ENCODE measurements at regions of chr10 and their contacts with region 1.

Region 1: GRCh38 chr10:98045785-98046389 is 15.5 kb upstream of the CRTAC1 start:
- DNase-seq: peak; percentile 73
- ATAC-seq: peak; percentile 92
- H3K4me3 Mint-ChIP-seq: no peak overlapping the region
- H3K27ac Mint-ChIP-seq: no peak overlapping the region
- H3K4me1 Mint-ChIP-seq: no peaks in the 10 kb centered on the region
- H3K27me3 Mint-ChIP-seq: peaks cover 28% of the 10 kb centered on the region
- CTCF ChIP-seq: peak; percentile 83

Region 2: GRCh38 chr10:97801422-97801821 is 244.5 kb before region 1 on chr10:
- CTCF ChIA-PET with region 1: no interaction called
- POLR2A ChIA-PET with region 1: no interaction called
- DNase-seq: no peak
- ATAC-seq: no peak
- H3K4me3 Mint-ChIP-seq: no peak overlapping the region
- H3K27ac Mint-ChIP-seq: no peak overlapping the region
- H3K4me1 Mint-ChIP-seq: peaks cover 17% of the 10 kb centered on the region
- H3K27me3 Mint-ChIP-seq: peaks cover 2% of the 10 kb centered on the region; the same call in 1 of the 2 replicates
- CTCF ChIP-seq: no peak

Region 3: GRCh38 chr10:97861097-97861750 is 184.7 kb before region 1 on chr10:
- CTCF ChIA-PET with region 1: interaction called, 10 read pairs
- POLR2A ChIA-PET with region 1: no interaction called
- DNase-seq: no peak
- ATAC-seq: peak; percentile 48
- H3K4me3 Mint-ChIP-seq: no peak overlapping the region
- H3K27ac Mint-ChIP-seq: no peak overlapping the region
- H3K4me1 Mint-ChIP-seq: peaks cover 26% of the 10 kb centered on the region
- H3K27me3 Mint-ChIP-seq: no peaks in the 10 kb centered on the region; the same call in 1 of the 2 replicates
- CTCF ChIP-seq: no peak

Region 4: DNA sequence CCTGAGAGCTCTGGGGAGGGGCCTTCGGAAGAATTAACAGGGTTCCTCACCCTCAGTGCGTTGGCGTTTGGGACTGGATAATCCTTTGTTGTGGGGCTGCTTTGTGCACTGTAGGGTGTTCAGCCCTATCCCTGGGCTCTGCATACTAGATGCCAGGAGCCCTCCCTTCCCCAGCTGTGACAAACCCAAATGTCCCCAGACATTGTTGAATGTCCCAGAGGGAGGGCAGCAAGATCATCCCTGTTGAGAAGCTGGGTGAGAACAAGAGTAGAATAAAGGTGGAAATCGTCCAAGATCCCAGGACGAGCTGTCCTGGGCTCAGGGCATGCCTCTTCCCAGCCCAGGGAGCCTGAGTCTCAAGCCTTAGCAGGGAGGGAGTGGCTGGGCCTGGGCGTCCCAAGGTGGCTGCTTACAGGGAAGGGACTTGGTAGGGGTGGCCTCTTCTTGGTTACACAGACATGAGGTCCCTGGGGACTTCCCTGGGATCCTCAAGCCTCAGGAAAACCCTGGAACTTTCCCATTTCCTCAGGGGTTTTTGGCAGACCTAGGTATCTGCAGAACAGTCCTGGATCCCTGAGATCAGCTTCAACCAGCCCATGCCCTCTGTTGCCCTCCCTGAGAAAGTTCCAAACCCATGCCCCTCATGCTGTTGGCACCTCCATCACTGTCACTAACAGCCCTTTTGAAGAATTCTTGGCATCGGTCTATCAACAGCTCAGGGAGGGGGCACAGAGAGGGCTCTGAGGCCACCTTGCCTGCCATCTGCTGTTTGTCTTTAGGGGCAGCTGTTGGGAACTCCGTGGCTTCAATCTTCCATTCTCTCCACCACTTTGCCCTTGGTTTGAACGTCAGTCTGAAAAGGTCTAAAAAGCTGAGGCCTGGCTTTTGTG is 142.5 kb before region 1 on chr10:
- CTCF ChIA-PET with region 1: interaction called, 16 read pairs
- POLR2A ChIA-PET with region 1: no interaction called
- DNase-seq: no peak
- ATAC-seq: peak; percentile 16; the same call in 1 of the 2 replicates
- H3K4me3 Mint-ChIP-seq: no peak overlapping the region
- H3K27ac Mint-ChIP-seq: no peak overlapping the region
- H3K4me1 Mint-ChIP-seq: peaks cover 5% of the 10 kb centered on the region; the same call in 1 of the 2 replicates
- H3K27me3 Mint-ChIP-seq: no peaks in the 10 kb centered on the region
- CTCF ChIP-seq: no peak

Region 5: DNA sequence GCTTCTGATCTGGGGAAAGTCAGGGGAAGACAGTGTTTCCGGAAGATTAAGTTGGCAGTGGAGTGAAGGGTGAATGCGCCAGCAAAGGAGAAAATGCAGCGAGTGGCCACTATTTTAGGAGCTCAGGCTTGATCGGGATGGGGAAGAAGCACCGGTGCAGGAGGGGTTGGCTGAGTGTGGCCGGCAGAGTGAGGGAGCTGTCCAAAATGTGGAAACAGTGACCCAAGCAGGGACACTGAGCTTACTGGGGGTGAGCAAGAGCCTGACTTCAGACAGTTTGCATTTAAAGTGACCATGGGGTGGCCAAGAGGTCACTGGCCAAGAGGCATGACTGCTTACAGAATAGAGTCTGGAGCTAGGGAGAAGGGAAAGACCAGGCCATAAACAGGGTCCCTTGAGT is 117.0 kb before region 1 on chr10:
- CTCF ChIA-PET with region 1: interaction called, 11 read pairs
- POLR2A ChIA-PET with region 1: no interaction called
- DNase-seq: no peak
- ATAC-seq: no peak
- H3K4me3 Mint-ChIP-seq: no peak overlapping the region
- H3K27ac Mint-ChIP-seq: no peak overlapping the region
- H3K4me1 Mint-ChIP-seq: no peaks in the 10 kb centered on the region
- H3K27me3 Mint-ChIP-seq: no peaks in the 10 kb centered on the region
- CTCF ChIP-seq: no peak

Region 6: DNA sequence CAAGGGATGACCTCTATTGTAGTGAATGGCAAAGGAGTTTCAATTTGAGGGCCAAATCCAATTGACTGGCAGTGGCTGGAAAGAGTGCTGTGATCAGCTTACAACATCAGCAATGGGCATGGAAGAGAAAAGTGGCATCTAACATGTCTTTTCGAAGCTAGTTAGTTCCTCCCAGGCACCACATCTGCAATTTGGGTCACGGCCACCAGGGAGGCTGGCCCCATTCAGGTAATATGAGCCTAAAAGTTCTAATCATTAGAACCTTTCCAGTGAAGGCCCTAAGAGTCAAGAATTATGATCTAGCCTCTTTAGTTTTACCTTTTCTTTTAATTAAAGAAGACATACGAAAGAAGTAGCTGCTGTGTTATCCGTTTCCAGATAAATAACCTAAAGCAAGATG is 32.8 kb before region 1 on chr10:
- CTCF ChIA-PET with region 1: interaction called, 11 read pairs
- POLR2A ChIA-PET with region 1: no interaction called
- DNase-seq: no peak
- ATAC-seq: peak; percentile 20; the same call in 1 of the 2 replicates
- H3K4me3 Mint-ChIP-seq: no peak overlapping the region
- H3K27ac Mint-ChIP-seq: no peak overlapping the region
- H3K4me1 Mint-ChIP-seq: peaks cover 28% of the 10 kb centered on the region
- H3K27me3 Mint-ChIP-seq: 0 out of 2 replicates have a peak, but pooled peaks cover under 1% of the 10 kb centered on the region
- CTCF ChIP-seq: peak; percentile 36; the same call in 1 of the 2 replicates

Measured in WTC11 (cell line).